Naive thymus-derived CD8-positive, alpha-beta T cell (primary cell): ENCODE measurements at regions of chr12 and their contacts with region 1.

Region 1: DNA sequence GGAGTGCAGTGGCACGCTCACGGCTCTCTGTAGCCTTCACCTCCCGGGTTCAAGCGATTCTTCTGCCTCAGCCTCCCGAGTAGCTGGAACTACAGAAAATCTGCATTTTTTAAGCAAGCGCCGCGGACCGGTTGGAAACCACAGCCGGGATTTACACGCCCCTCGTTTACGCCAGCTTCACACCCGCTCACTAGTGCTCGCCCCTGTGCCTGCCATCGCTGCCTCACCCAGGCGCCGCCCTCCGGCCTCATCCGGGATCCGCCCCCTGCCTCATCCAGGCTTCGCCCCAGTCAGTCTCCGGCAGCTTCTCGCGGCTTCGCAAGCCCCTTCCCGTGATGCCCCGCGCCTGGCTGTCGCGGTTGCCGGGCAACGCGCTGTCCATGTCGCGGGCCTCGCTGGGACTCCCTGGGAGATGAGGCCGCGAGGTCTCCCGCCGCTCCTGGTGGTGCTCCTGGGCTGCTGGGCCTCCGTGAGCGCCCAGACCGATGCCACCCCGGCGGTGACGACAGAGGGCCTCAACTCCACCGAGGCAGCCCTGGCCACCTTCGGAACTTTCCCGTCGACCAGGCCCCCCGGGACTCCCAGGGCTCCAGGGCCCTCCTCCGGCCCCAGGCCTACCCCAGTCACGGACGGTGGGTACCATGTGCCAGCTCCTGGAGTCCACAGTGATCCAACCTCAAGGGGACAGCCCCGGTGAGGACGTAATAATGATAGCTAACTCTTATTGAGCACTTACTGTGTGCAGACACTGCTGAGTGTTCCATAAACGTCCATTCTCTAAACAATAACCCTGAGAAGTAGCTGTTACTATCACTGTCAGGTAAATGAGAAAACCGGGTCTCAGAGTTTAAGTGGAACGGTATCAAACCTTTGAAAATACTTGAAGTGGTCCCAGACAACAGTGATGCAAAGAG is at the start of gene TCTN1:
- DNase-seq: peak; percentile 89 to 97 (median 94)
- ATAC-seq: peak; percentile 99
- H3K4me3 Mint-ChIP-seq: peak within 1 kb of the TSS; percentile 81 to 93 (median 89)
- H3K27ac Mint-ChIP-seq: peak within 1 kb of the TSS; percentile 68 to 97 (median 90)
- H3K4me1 Mint-ChIP-seq: peaks cover 0 to 25% (median 4%) of the 10 kb centered on the region in 4 donors
- H3K27me3 Mint-ChIP-seq: no peaks in the 10 kb centered on the region
- polyA plus RNA-seq, gene TCTN1: 8.7 to 16.4 (median 13.6) TPM

Region 2: GRCh38 chr12:110501752-110502738 is 112.0 kb before region 1 on chr12 and contains the starts of genes RAD9B and VPS29:
- POLR2A ChIA-PET with region 1: interaction called, 10 read pairs
- DNase-seq: peak; percentile 96 to 100 (median 99)
- ATAC-seq: peak; percentile 92 to 95
- H3K4me3 Mint-ChIP-seq: peak within 1 kb of the TSS; percentile 94 to 99 (median 96)
- H3K27ac Mint-ChIP-seq: peak within 1 kb of the TSS; percentile 92 to 99 (median 97)
- H3K4me1 Mint-ChIP-seq: peaks cover 16 to 45% (median 39%) of the 10 kb centered on the region in 4 donors
- H3K27me3 Mint-ChIP-seq: peaks cover 0 to 3% (median 0%) of the 10 kb centered on the region in 5 donors
- polyA plus RNA-seq, gene RAD9B: 0.89 to 1.3 (median 1.0) TPM
- polyA plus RNA-seq, gene VPS29: 128 to 167 (median 167) TPM

Region 3: GRCh38 chr12:110568752-110569151 is 45.3 kb before region 1 on chr12:
- POLR2A ChIA-PET with region 1: no interaction called
- DNase-seq: no peak
- ATAC-seq: no peak
- H3K4me3 Mint-ChIP-seq: no peak overlapping the region
- H3K27ac Mint-ChIP-seq: no peak overlapping the region
- H3K4me1 Mint-ChIP-seq: peaks cover 27 to 63% (median 45%) of the 10 kb centered on the region in 4 donors
- H3K27me3 Mint-ChIP-seq: no peaks in the 10 kb centered on the region

Region 4: DNA sequence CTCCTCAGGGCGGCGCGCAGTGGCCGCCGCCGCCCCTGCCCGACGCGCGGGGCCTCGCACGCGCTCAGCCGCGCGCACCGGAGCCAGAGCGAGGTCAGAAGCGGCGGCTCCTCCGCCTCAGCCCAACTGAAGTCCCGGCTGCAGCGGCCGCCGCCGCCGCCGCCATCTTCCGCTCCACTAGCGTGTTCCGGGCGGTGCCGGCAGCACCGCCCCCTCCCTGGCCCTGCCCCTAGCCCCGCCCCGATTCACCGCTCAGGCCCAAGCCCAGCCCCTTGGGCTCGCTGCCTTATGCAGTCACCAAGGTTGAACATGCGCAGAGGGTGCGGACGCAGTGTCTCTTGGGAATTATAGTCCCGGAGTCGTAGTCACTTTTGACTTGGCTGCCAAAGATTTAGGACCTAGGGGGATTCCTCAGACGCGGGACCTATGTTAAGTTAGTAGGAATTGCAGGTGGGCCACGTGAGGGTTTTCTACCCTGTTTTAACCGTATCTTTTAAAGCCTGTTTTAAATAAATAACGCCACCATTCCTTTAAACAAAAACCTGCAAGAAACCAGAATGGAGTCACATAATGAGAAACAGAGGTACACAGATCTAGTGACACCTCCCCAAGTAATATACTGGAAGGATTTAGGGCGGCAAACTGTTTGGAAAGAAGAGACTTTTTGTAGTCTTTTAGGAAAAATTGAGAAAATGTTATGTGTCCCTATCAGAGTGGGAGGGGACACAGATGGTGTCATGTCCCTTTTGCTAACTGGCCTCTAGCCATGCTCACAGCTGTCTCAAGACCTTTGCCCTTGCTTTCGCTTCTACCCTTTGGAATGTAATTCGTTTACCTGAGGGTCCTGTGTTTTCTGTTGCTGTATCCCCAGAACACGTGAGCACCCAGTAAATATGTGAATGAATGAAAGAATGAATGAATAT is 30.6 kb before region 1 on chr12 and contains the start of gene PPTC7:
- POLR2A ChIA-PET with region 1: interaction called, 11 read pairs
- DNase-seq: peak; percentile 86 to 98 (median 94)
- ATAC-seq: peak; percentile 89 to 94
- H3K4me3 Mint-ChIP-seq: peak within 1 kb of the TSS; percentile 89 to 97 (median 94)
- H3K27ac Mint-ChIP-seq: peak within 1 kb of the TSS; percentile 90 to 98 (median 95)
- H3K4me1 Mint-ChIP-seq: peaks cover 16 to 67% (median 63%) of the 10 kb centered on the region in 4 donors
- H3K27me3 Mint-ChIP-seq: no peaks in the 10 kb centered on the region
- polyA plus RNA-seq, gene PPTC7: 7.6 to 10.2 (median 9.6) TPM

Region 5: DNA sequence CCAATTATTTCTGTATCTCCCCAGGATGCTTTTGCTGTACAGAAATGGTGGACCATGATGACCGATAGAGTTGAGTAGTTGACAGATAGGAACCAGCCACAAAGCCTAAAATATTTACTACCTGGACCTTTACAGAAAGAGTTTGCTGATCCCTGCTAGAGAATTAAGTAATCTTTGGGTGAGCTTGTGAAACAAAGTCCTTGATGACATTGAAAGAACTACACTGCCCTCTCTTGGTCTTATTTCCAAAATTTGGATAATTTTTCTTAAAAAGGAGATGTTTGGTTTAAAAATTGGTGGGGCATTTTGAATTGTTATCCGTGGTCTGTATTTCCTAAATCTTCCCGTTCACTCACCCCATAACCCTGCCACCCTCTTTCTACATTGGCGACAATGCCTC is 13.8 kb before region 1 on chr12:
- POLR2A ChIA-PET with region 1: interaction called, 20 read pairs
- DNase-seq: peak in 3 of 10 donors; percentile 57 to 61 (median 60)
- ATAC-seq: peak; percentile 48 to 58
- H3K4me3 Mint-ChIP-seq: no peak overlapping the region
- H3K27ac Mint-ChIP-seq: peak overlapping the region in 6 of 10 donors; percentile 15 to 85 (median 35)
- H3K4me1 Mint-ChIP-seq: peaks cover 4 to 32% (median 10%) of the 10 kb centered on the region in 4 donors
- H3K27me3 Mint-ChIP-seq: no peaks in the 10 kb centered on the region

Region 6: DNA sequence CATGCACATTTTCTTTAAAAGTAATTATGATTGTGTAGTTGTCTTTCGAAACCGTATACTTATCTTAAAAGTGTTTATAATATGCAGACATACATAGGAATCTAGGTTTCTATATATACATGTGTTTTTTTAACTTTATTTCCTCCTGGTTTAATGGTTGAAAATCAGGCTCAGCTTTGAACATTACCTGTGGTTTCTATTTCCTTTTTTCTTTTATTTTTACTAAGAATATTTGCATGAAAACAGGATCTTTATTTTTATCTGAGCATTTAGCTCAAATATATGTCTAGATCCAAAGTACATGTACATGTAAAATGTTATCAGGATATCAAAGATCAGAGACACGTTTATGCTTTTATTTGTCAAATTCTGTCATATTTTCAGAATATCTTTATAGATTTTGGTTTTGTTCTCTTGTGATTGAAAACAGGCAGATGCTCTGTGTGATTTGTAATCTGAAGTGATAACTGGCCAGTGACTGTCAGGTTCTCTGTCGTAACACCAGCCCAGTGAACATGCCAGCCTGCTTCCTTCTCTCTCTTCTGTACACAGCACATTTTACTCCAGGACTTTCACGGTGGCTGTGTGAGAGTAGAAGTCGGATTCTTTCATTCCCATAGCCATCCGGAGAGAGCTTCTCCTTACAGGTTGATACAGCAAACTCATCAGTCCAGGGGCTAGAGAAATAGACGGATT is 13.6 kb after region 1 on chr12:
- POLR2A ChIA-PET with region 1: interaction called, 11 read pairs
- DNase-seq: no peak
- ATAC-seq: no peak
- H3K4me3 Mint-ChIP-seq: peak overlapping the region; percentile 40 to 72 (median 58)
- H3K27ac Mint-ChIP-seq: peak overlapping the region; percentile 49 to 89 (median 79)
- H3K4me1 Mint-ChIP-seq: peaks cover 7 to 45% (median 15%) of the 10 kb centered on the region in 4 donors
- H3K27me3 Mint-ChIP-seq: no peaks in the 10 kb centered on the region

Region 7: GRCh38 chr12:110689281-110690126 is 75.5 kb after region 1 on chr12:
- POLR2A ChIA-PET with region 1: interaction called, 22 read pairs
- DNase-seq: peak; percentile 22 to 73 (median 44)
- ATAC-seq: peak; percentile 78 to 81
- H3K4me3 Mint-ChIP-seq: peak overlapping the region; percentile 85 to 98 (median 92)
- H3K27ac Mint-ChIP-seq: peak overlapping the region; percentile 73 to 95 (median 91)
- H3K4me1 Mint-ChIP-seq: peaks cover 19 to 74% (median 40%) of the 10 kb centered on the region in 4 donors
- H3K27me3 Mint-ChIP-seq: no peaks in the 10 kb centered on the region

Region 8: GRCh38 chr12:110698171-110698902 is 84.3 kb after region 1 on chr12:
- POLR2A ChIA-PET with region 1: interaction called, 10 read pairs
- DNase-seq: peak; percentile 60 to 88 (median 77)
- ATAC-seq: peak; percentile 100
- H3K4me3 Mint-ChIP-seq: peak overlapping the region in 5 of 10 donors; percentile 20 to 55 (median 39)
- H3K27ac Mint-ChIP-seq: peak overlapping the region in 8 of 10 donors; percentile 56 to 92 (median 76)
- H3K4me1 Mint-ChIP-seq: peaks cover 7 to 39% (median 12%) of the 10 kb centered on the region in 4 donors
- H3K27me3 Mint-ChIP-seq: no peaks in the 10 kb centered on the region